ENCODE measurements at regions of chr7 and their contacts with region 1.

Region 1: DNA sequence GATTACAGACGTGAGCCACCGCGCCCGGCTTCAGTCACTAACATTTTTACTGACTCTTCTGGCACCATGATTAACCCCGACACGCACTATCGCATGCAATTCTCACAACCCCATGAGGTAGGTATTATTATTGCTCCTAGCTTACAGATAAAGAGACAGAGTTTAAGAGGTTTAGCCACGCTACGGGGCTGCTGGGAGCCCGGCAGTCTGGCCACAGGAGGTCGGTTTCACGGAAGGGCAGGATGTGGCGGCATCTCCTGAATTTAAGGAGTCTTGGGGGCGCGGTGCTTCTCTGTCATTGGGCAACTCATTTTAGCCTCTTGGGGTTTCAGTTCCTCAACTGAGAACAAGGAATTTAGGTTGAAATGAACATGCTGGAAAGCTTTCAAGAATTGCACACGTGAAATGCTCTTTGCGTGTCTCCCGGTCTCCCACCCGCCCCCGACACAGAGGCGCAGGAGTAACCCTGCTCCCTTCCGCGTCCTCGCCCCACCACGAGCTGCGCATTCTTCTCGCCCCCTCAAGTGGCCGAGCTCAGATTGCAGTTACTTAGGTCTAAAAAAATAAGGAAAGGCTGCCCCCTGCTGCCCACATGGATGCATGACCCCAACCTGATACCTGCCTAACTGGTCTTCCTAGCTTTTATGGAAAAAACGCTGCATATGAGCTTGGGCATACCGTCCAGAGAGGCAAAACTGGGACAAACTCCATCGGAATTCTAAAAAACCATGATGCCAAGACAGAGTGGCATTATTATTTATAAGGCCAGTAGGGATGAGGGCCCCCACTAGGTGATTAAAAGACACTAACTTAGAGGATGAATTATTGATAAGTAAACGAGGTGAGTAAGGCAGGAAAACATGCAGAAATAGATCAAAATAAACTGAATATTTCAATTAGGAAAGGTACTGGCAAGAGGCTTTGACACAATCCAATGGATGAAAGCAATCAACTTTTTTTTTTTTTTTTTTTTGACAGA is 12.4 kb downstream of the PRSS2 start:
- DNase-seq: peak; percentile 27
- H3K4me3 ChIP-seq: peak overlapping the region; percentile 42
- H3K27me3 ChIP-seq: no peaks in the 10 kb centered on the region; the same call in none of the 2 replicates
- CTCF ChIP-seq: peak; percentile 93

Region 2: DNA sequence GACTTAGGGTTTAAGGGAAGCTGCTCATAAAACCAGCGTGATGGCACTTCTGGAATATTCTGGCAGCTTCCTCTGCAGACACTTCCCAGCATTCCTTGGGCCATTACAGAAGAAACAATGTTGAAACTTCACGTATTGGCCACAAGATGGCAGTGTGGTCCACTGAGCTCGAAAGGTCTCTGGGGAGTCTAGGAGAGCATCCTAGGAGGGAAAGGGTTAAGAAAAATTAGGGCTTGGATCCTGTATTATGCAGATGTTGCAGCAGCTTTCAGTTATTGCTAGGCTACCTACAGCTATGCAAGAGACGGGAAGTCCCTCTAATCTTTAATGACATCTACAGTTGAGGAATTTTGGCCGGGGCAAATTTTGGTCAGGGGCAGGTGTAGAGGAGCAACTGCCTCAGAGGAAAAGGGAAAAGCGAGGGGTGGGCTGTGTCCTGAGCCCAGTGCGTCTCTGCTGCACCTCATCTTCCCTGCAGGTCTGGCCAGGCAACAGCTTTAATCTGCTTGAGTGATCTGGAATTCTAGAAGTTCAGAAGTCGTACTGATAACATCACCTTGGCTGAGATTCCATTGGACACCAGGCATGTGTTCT is 304.6 kb before region 1 on chr7:
- CTCF ChIA-PET with region 1: interaction called, 17 read pairs
- POLR2A ChIA-PET with region 1: no interaction called
- DNase-seq: no peak
- H3K4me3 ChIP-seq: no peak overlapping the region
- H3K27me3 ChIP-seq: no peaks in the 10 kb centered on the region
- CTCF ChIP-seq: peak; percentile 74

Region 3: GRCh38 chr7:142523821-142524460 is 259.3 kb before region 1 on chr7:
- CTCF ChIA-PET with region 1: interaction called, 87 read pairs
- POLR2A ChIA-PET with region 1: no interaction called
- DNase-seq: no peak
- H3K4me3 ChIP-seq: no peak overlapping the region
- H3K27me3 ChIP-seq: peaks cover 11% of the 10 kb centered on the region
- CTCF ChIP-seq: peak; percentile 28

Region 4: GRCh38 chr7:142612237-142612881 is 170.9 kb before region 1 on chr7:
- CTCF ChIA-PET with region 1: interaction called, 13 read pairs
- POLR2A ChIA-PET with region 1: no interaction called
- DNase-seq: no peak
- H3K4me3 ChIP-seq: no peak overlapping the region
- H3K27me3 ChIP-seq: no peaks in the 10 kb centered on the region
- CTCF ChIP-seq: no peak

Region 5: DNA sequence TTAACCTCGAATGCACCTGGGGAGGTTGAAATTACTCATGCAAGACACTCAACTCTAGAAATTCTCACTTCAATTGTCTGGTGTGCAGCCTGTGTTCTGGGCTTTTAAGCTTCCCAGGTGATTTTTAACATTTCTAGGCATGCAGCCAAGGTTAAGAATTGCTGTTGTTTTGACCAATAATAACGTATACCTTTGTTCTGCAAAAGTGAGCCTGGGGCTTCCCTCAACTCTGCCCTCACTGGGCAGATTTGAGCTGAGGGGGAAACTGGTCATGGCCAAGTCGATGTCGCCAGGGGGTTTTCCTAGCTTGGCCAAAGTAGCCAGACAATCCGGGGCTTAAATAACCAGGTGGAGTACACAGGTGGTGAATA is 11.9 kb before region 1 on chr7:
- CTCF ChIA-PET with region 1: interaction called, 27 read pairs
- POLR2A ChIA-PET with region 1: no interaction called
- DNase-seq: no peak
- H3K4me3 ChIP-seq: no peak overlapping the region
- H3K27me3 ChIP-seq: peaks cover 5% of the 10 kb centered on the region; the same call in 1 of the 2 replicates
- CTCF ChIP-seq: no peak